H1 (cell line): ENCODE measurements at regions of chr15 and their contacts with region 1.

Region 1: DNA sequence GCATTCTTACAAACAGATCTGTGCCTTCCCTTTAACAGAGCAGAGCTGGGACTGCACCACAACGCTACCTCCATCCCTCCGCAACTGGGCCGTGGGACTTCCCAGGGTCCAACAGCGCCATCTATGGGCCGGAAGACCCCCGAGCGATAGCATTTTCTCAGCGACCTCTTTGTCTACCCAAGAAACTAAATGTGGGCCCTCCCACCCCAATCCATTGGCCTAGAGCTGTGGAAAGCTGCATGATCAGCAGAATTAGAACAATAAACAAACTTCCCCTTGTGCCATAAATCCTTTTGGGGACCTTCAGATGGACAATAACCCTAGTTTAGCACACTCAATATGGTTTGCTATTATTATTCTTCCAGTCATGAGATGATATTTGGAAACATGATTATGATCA is 74.7 kb upstream of the NTRK3 start:
- DNase-seq: peak; percentile 77 to 96
- H3K4me3 ChIP-seq: no peak overlapping the region
- H3K27ac ChIP-seq: no peak overlapping the region
- H3K4me1 ChIP-seq: no peaks in the 10 kb centered on the region
- H3K27me3 ChIP-seq: no peaks in the 10 kb centered on the region
- CTCF ChIP-seq: peak; percentile 83 to 91 (median 91)
- EP300 ChIP-seq: 0 out of 3 replicates have a peak, but pooled peaks of 1 of the 2 experiments have one; percentile 43
- POLR2A ChIP-seq: no peak
- RAD21 ChIP-seq: peak; percentile 91 to 92

Region 2: DNA sequence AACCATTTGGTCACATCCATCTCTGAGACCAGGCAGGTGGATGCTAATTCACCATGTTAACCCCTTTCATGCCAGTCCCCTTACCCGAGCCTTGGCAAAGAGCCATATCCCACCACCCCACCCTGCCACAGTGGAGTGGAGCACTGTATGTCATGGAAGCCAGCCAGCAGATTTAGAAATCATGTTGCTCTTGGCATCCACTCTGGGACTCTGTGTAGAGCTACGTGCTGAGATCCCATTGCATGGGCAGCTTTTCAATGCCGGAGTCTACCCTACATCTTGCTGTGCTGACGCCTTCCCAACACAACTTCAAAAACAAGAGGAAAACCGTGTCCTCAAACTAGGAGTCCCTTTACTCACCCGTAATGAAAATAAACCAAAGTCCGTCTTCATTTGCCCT is 205.7 kb before region 1 on chr15:
- CTCF ChIA-PET with region 1: no interaction called
- POLR2A ChIA-PET with region 1: no interaction called
- DNase-seq: no peak
- H3K4me3 ChIP-seq: no peak overlapping the region
- H3K27ac ChIP-seq: no peak overlapping the region
- H3K4me1 ChIP-seq: peaks cover 0 to 3% (median 1%) of the 10 kb centered on the region in 4 experiments; a peak in 3 of 7 replicates
- H3K27me3 ChIP-seq: no peaks in the 10 kb centered on the region
- CTCF ChIP-seq: no peak
- EP300 ChIP-seq: no peak
- POLR2A ChIP-seq: no peak
- RAD21 ChIP-seq: no peak

Region 3: DNA sequence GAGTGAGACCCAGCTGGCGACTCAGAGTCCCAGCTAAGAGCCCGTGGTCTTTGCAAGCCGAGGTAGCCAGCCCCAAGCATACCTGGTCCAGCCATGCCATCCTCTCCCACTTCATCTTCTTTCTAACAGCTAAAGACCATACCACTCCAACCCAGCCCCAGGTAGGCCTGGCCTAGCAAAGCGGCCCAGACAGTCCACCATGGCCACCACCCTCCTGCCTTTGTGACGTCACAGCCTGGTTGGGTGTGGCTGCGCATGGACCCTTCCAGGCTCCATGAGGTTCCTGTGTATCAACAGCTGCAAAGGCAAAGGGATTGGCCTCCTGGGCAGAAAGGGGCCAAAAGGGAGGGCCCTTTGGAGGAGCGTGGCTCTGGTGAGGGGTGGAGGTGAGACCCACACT is 78.8 kb before region 1 on chr15:
- CTCF ChIA-PET with region 1: interaction called, 32 read pairs
- POLR2A ChIA-PET with region 1: interaction called, 5 read pairs
- DNase-seq: no peak
- H3K4me3 ChIP-seq: no peak overlapping the region
- H3K27ac ChIP-seq: no peak overlapping the region
- H3K4me1 ChIP-seq: peaks cover 0 to 5% (median 3%) of the 10 kb centered on the region in 4 experiments; a peak in 5 of 7 replicates
- H3K27me3 ChIP-seq: peaks cover 21 to 49% (median 35%) of the 10 kb centered on the region in 4 experiments
- CTCF ChIP-seq: no peak
- EP300 ChIP-seq: no peak
- POLR2A ChIP-seq: no peak
- RAD21 ChIP-seq: no peak

Region 4: GRCh38 chr15:88274553-88275460 is 56.5 kb before region 1 on chr15:
- CTCF ChIA-PET with region 1: interaction called, 18 read pairs
- POLR2A ChIA-PET with region 1: no interaction called
- DNase-seq: peak; percentile 60 to 89
- H3K4me3 ChIP-seq: no peak overlapping the region
- H3K27ac ChIP-seq: no peak overlapping the region
- H3K4me1 ChIP-seq: no peaks in the 10 kb centered on the region
- H3K27me3 ChIP-seq: peaks cover 0 to 6% (median under 1%) of the 10 kb centered on the region in 4 experiments; a peak in 1 of 7 replicates
- CTCF ChIP-seq: peak; percentile 92 to 97 (median 94)
- EP300 ChIP-seq: no peak
- POLR2A ChIP-seq: no peak
- RAD21 ChIP-seq: peak; percentile 91 to 92

Region 5: DNA sequence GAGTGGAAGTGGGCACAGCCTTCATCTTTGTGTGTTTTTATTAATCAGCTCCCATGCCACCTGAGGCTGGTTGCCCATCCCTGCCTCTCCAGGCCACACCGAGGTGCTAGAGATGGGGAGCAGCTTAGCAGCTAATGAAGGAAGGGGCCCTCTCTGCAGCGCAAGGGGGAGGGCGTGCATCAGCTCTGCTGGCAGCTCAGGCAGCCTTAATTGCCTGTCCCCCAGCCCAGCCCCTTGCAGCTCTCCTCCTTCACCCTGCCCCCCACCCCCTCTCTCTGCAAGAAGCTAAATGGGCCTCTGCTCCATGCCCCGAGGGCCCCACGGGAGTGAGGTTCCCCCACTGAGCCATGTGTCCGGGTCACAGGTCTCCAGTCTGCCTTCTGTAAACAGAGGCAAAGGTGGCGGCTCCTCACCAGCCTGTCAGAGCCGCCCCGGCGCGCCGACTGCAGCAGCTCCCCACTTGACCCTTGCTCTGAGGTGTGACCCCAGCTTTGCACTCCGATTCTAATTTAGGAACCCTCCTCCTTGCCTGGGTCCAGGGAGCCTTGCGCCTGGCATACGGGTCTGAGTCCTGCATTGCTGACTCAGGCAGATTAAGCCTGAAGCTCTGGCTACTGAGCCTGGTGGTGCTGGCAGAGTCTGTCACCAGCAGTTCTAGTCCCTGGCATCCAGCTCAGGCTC is 46.8 kb before region 1 on chr15:
- CTCF ChIA-PET with region 1: interaction called, 12 read pairs
- POLR2A ChIA-PET with region 1: no interaction called
- DNase-seq: no peak
- H3K4me3 ChIP-seq: no peak overlapping the region
- H3K27ac ChIP-seq: no peak overlapping the region
- H3K4me1 ChIP-seq: peaks cover 0 to 12% (median 4%) of the 10 kb centered on the region in 4 experiments; a peak in 5 of 7 replicates
- H3K27me3 ChIP-seq: no peaks in the 10 kb centered on the region; a peak in 1 of 7 replicates
- CTCF ChIP-seq: no peak
- EP300 ChIP-seq: no peak
- POLR2A ChIP-seq: no peak
- RAD21 ChIP-seq: no peak

Region 6: GRCh38 chr15:88299497-88299896 is 31.8 kb before region 1 on chr15:
- CTCF ChIA-PET with region 1: interaction called, 10 read pairs
- POLR2A ChIA-PET with region 1: no interaction called
- DNase-seq: no peak
- H3K4me3 ChIP-seq: no peak overlapping the region
- H3K27ac ChIP-seq: no peak overlapping the region
- H3K4me1 ChIP-seq: peaks cover 6 to 18% (median 9%) of the 10 kb centered on the region in 4 experiments
- H3K27me3 ChIP-seq: no peaks in the 10 kb centered on the region
- CTCF ChIP-seq: no peak
- EP300 ChIP-seq: no peak
- POLR2A ChIP-seq: no peak
- RAD21 ChIP-seq: no peak

Region 7: GRCh38 chr15:88312941-88313579 is 18.2 kb before region 1 on chr15:
- CTCF ChIA-PET with region 1: interaction called, 15 read pairs
- POLR2A ChIA-PET with region 1: no interaction called
- DNase-seq: no peak
- H3K4me3 ChIP-seq: no peak overlapping the region
- H3K27ac ChIP-seq: no peak overlapping the region
- H3K4me1 ChIP-seq: no peaks in the 10 kb centered on the region
- H3K27me3 ChIP-seq: no peaks in the 10 kb centered on the region
- CTCF ChIP-seq: no peak
- EP300 ChIP-seq: no peak
- POLR2A ChIP-seq: no peak
- RAD21 ChIP-seq: no peak

Region 8: GRCh38 chr15:88447206-88447605 is 115.9 kb after region 1 on chr15:
- CTCF ChIA-PET with region 1: interaction called, 25 read pairs
- POLR2A ChIA-PET with region 1: no interaction called
- DNase-seq: no peak
- H3K4me3 ChIP-seq: no peak overlapping the region
- H3K27ac ChIP-seq: no peak overlapping the region
- H3K4me1 ChIP-seq: no peaks in the 10 kb centered on the region
- H3K27me3 ChIP-seq: peaks cover 0 to 10% (median 5%) of the 10 kb centered on the region in 4 experiments; a peak in 4 of 7 replicates
- CTCF ChIP-seq: no peak
- EP300 ChIP-seq: no peak
- POLR2A ChIP-seq: no peak
- RAD21 ChIP-seq: no peak

Region 9: DNA sequence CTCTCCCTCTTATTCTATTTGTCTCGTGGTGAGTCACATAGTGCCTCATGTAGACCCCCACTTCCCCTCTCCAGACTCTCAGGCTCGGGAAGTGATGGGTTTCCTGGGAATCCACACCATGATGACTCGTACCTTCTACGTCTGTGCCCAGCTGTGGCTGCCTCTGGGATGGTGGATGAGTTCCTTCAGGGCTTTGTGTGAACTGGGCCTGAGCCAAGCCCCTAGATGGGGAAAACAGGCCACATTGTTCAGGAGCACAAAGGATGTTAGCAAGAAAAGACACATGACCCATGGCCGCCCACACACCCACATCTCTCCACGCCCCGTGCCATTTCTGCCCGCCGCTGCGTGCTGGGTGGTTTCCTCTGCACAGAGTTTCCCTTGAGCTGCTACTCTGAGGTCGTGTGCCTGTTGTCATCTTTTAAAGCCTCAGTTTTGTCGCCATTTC is 318.0 kb after region 1 on chr15:
- CTCF ChIA-PET with region 1: no interaction called
- POLR2A ChIA-PET with region 1: no interaction called
- DNase-seq: no peak
- H3K4me3 ChIP-seq: no peak overlapping the region
- H3K27ac ChIP-seq: no peak overlapping the region
- H3K4me1 ChIP-seq: peaks cover 0 to 19% (median 10%) of the 10 kb centered on the region in 4 experiments; a peak in 6 of 7 replicates
- H3K27me3 ChIP-seq: no peaks in the 10 kb centered on the region
- CTCF ChIP-seq: no peak
- EP300 ChIP-seq: no peak
- POLR2A ChIP-seq: no peak
- RAD21 ChIP-seq: no peak